ENCODE measurements at regions of chr10 and their contacts with region 1.

Region 1: GRCh38 chr10:33099748-33100147 is 141.7 kb upstream of the ITGB1 start:
- DNase-seq: no peak
- ATAC-seq: peak; percentile 74
- H3K4me3 Mint-ChIP-seq: no peak overlapping the region
- H3K27ac Mint-ChIP-seq: peak overlapping the region; percentile 45
- H3K4me1 Mint-ChIP-seq: peaks cover 39% of the 10 kb centered on the region
- H3K27me3 Mint-ChIP-seq: peaks cover 3% of the 10 kb centered on the region

Region 2: DNA sequence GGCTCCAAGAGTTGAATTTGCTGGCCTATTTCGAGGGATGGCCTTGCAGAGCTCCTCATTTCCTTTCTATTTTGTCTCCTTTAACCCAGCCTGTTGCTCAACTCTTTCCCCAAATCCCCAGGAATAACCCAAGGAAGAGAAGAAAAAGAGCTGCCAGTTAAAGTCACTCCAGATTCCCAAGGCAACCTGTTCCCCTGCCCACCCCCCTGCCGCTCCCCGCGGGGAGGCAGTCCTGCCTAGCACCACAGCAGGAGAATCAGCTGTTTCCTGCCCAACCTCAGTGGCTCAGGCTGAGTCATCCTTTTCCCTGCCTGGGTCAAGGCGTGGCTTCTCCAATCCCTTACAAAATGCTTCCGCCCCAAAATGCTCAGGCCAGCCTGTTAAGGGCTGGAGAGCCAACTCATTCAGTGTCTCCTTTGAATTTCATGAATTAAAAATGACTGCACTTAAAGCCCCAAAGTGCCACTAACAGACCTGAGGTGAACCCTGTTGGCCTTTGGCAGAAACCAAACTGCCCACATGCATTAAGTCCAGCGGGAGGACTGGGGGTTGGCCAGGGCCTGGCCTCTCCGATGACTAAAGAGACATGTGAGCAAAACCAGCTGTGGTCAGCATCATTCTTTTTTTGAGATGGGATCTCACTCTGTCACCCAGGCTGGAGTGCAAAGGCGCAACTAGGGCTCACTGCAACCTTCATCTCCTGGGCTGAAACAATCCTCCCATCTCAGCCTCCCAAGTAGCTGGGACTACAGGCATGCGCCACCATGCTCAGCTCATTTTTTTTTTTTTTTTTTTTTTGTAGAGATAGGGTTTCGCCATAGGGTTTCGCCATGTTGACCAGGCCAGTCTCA is 960.3 kb before region 1 on chr10:
- CTCF ChIA-PET with region 1: no interaction called
- POLR2A ChIA-PET with region 1: no interaction called
- intact Hi-C with region 1: no loop called
- DNase-seq: peak; percentile 24
- ATAC-seq: peak; percentile 55
- H3K4me3 Mint-ChIP-seq: no peak overlapping the region
- H3K27ac Mint-ChIP-seq: no peak overlapping the region
- H3K4me1 Mint-ChIP-seq: peaks cover 4% of the 10 kb centered on the region
- H3K27me3 Mint-ChIP-seq: no peaks in the 10 kb centered on the region

Region 3: GRCh38 chr10:33109788-33110469 is 10.2 kb after region 1 on chr10:
- CTCF ChIA-PET with region 1: interaction called, 13 read pairs
- POLR2A ChIA-PET with region 1: no interaction called
- intact Hi-C with region 1: no loop called
- DNase-seq: no peak
- ATAC-seq: no peak
- H3K4me3 Mint-ChIP-seq: no peak overlapping the region
- H3K27ac Mint-ChIP-seq: no peak overlapping the region
- H3K4me1 Mint-ChIP-seq: peaks cover 55% of the 10 kb centered on the region
- H3K27me3 Mint-ChIP-seq: peaks cover 7% of the 10 kb centered on the region